Natural killer cell (primary cell): ENCODE measurements at regions of chr1 and their contacts with region 1.

Region 1: DNA sequence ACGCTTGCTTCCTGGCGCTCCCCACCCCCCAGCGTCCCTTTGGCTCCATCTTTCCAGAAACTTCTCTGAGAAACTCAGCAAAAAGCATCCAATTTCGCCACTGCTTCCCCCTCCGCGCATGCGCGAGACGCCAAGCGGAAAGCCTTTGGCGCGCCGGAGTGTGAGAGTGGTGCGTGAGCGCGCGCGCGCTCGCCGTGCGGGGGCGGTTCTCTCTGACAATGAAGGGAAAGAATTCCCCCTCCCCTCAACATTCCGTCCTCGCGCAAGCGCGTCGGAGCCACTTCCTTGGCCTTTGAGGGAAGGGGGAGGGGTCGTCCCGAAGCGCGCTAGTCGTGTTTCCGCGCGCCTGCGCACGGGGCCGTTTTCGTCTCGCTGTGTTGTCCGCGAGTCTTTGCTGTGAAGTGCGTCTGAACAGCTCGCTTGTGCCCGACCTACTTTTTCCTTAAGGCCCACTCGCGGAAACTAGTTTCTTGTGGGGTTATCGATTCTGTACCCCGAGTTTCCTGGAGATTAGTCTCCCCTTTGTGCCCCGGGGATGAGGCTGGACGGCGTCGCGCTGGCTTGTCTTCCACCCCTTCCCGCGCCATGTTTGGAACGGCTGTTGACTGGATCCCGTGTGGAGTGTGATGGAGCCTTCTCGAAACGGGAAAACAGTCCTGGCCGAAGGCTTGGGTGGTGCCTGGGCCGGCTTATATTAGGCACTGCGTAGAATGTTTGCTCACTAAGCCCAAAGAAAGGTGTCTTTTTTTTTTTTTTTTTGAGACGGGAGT is 11.6 kb upstream of the SPEN start:
- DNase-seq: peak; percentile 96 to 100
- ATAC-seq: peak; percentile 51 to 77 (median 58)
- H3K4me3 ChIP-seq: peak overlapping the region; percentile 80
- H3K4me3 Mint-ChIP-seq: peak overlapping the region; percentile 96
- H3K27ac ChIP-seq: peak overlapping the region; percentile 96
- H3K27ac Mint-ChIP-seq: peak overlapping the region; percentile 95 to 99
- H3K4me1 ChIP-seq: peaks cover 32% of the 10 kb centered on the region
- H3K4me1 Mint-ChIP-seq: peaks cover 30 to 35% of the 10 kb centered on the region in 2 donors
- H3K27me3 ChIP-seq: no peaks in the 10 kb centered on the region
- H3K27me3 Mint-ChIP-seq: no peaks in the 10 kb centered on the region
- CTCF ChIP-seq: no peak

Region 2: DNA sequence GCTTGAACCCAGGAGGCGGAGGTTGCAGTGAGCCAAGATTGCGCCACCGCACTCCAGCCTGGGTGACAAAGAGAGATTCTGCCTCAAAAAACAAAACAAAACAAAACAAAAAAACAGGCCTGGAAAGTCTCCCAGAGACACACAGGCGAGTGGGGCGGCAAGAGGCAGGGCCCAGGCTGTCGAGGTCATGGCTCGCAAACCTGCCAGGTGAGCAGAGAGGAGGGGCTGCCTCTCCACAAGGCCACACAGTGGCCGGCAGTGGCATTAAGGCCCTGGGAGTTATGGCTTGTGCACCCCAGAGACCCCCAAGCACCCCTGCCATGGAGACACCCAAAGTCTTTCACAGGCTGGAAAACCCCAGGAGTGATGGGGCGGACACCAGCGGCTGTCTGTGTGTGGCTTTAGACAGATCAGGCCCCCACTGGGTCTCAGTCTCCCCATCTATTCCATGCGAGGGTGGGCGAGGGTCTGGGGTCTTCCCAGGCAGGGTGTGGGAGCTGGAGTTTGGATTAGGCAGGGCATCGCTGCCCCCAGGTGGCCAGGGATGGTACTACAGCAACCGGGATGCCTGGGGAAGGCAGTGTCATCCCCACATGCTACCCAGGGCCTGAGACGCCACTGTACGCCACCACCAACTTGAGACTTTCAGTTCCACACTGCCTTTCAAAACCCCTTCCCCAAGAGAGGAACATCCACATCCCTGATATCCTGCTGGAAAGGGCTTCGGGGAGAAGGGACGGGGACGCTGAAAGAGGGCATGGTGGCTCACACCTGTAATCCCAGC is 404.9 kb before region 1 on chr1:
- intact Hi-C with region 1: no loop called
- DNase-seq: peak; percentile 84
- ATAC-seq: peak; percentile 51 to 76 (median 57)
- H3K4me3 ChIP-seq: no peak overlapping the region
- H3K4me3 Mint-ChIP-seq: peak overlapping the region; percentile 45
- H3K27ac ChIP-seq: peak overlapping the region; percentile 52
- H3K27ac Mint-ChIP-seq: peak overlapping the region; percentile 88 to 93
- H3K4me1 ChIP-seq: peaks cover 51% of the 10 kb centered on the region
- H3K4me1 Mint-ChIP-seq: peaks cover 45 to 68% of the 10 kb centered on the region in 2 donors
- H3K27me3 ChIP-seq: no peaks in the 10 kb centered on the region
- H3K27me3 Mint-ChIP-seq: no peaks in the 10 kb centered on the region
- CTCF ChIP-seq: peak; percentile 96

Region 3: GRCh38 chr1:15627343-15627988 is 208.5 kb before region 1 on chr1:
- intact Hi-C with region 1: no loop called
- DNase-seq: no peak
- ATAC-seq: no peak
- H3K4me3 ChIP-seq: no peak overlapping the region
- H3K4me3 Mint-ChIP-seq: no peak overlapping the region
- H3K27ac ChIP-seq: no peak overlapping the region
- H3K27ac Mint-ChIP-seq: peak overlapping the region in 1 of 2 donors; percentile 27
- H3K4me1 ChIP-seq: no peaks in the 10 kb centered on the region
- H3K4me1 Mint-ChIP-seq: peaks cover 19 to 21% of the 10 kb centered on the region in 2 donors
- H3K27me3 ChIP-seq: no peaks in the 10 kb centered on the region
- H3K27me3 Mint-ChIP-seq: no peaks in the 10 kb centered on the region
- CTCF ChIP-seq: no peak

Region 4: GRCh38 chr1:15820478-15820877 is 15.4 kb before region 1 on chr1:
- intact Hi-C with region 1: no loop called
- DNase-seq: no peak
- ATAC-seq: no peak
- H3K4me3 ChIP-seq: no peak overlapping the region
- H3K4me3 Mint-ChIP-seq: no peak overlapping the region
- H3K27ac ChIP-seq: no peak overlapping the region
- H3K27ac Mint-ChIP-seq: no peak overlapping the region
- H3K4me1 ChIP-seq: no peaks in the 10 kb centered on the region
- H3K4me1 Mint-ChIP-seq: peaks cover 3 to 4% of the 10 kb centered on the region in 2 donors
- H3K27me3 ChIP-seq: no peaks in the 10 kb centered on the region
- H3K27me3 Mint-ChIP-seq: no peaks in the 10 kb centered on the region
- CTCF ChIP-seq: no peak

Region 5: DNA sequence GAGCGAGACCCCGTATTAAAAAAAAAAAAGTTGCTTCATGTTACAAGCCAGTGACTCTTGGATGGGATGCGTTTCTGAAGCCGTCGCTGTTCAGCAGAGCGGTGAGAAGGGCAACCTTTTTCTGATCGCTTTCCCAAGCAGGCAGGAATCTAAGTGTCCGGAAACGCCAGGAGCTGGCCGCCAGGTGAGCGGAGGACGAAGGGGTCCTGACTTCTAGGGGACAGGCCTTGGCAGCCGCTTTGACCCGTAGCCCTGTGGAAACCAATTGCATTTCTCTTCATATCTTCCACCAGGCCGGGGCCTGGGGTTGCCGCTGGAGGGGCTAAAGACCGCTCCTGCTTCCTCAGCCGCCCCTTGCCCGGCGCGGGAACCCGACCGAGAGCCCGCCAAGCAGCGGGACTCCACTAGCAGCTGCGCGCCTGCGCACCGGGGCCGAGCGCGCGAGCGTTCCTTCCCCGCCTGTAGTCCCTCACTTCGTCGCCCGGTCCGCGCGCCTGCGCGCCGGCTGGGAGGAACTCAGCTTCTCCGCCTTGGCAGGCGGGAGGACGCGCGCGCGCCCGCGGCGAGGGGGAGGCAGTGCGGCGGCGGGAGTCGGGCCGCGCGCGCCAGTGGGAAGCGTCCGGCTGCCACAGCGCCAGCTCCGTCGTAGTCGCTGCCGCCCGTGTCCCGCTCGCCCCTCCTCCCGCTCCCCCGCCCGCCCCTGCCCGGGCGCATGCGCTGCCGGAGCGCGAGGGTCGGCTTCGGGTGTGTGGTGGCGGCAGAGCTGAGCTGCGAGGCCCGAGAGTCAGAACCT is 11.4 kb after region 1 on chr1 and contains the start of gene SPEN:
- intact Hi-C with region 1: loop called (anchors 1 kb)
- DNase-seq: peak; percentile 95 to 99
- ATAC-seq: peak; percentile 80 to 95 (median 85)
- H3K4me3 ChIP-seq: peak within 1 kb of the TSS; percentile 98
- H3K4me3 Mint-ChIP-seq: peak within 1 kb of the TSS; percentile 98
- H3K27ac ChIP-seq: peak within 1 kb of the TSS; percentile 99
- H3K27ac Mint-ChIP-seq: peak within 1 kb of the TSS; percentile 95 to 96
- H3K4me1 ChIP-seq: peaks cover 37% of the 10 kb centered on the region
- H3K4me1 Mint-ChIP-seq: peaks cover 30% of the 10 kb centered on the region in 2 donors
- H3K27me3 ChIP-seq: no peaks in the 10 kb centered on the region
- H3K27me3 Mint-ChIP-seq: no peaks in the 10 kb centered on the region
- CTCF ChIP-seq: no peak
- total RNA-seq, gene SPEN: 98.1 to 114 (median 105) TPM

Region 6: GRCh38 chr1:15885701-15886610 is 50.0 kb after region 1 on chr1:
- intact Hi-C with region 1: loop called (anchors 5 kb)
- DNase-seq: peak; percentile 42 to 48
- ATAC-seq: peak; percentile 57 to 72 (median 58)
- H3K4me3 ChIP-seq: peak overlapping the region; percentile 6
- H3K4me3 Mint-ChIP-seq: peak overlapping the region; percentile 43
- H3K27ac ChIP-seq: peak overlapping the region; percentile 59
- H3K27ac Mint-ChIP-seq: peak overlapping the region; percentile 64 to 76
- H3K4me1 ChIP-seq: peaks cover 22% of the 10 kb centered on the region
- H3K4me1 Mint-ChIP-seq: peaks cover 49 to 57% of the 10 kb centered on the region in 2 donors
- H3K27me3 ChIP-seq: no peaks in the 10 kb centered on the region
- H3K27me3 Mint-ChIP-seq: no peaks in the 10 kb centered on the region
- CTCF ChIP-seq: no peak

Region 7: DNA sequence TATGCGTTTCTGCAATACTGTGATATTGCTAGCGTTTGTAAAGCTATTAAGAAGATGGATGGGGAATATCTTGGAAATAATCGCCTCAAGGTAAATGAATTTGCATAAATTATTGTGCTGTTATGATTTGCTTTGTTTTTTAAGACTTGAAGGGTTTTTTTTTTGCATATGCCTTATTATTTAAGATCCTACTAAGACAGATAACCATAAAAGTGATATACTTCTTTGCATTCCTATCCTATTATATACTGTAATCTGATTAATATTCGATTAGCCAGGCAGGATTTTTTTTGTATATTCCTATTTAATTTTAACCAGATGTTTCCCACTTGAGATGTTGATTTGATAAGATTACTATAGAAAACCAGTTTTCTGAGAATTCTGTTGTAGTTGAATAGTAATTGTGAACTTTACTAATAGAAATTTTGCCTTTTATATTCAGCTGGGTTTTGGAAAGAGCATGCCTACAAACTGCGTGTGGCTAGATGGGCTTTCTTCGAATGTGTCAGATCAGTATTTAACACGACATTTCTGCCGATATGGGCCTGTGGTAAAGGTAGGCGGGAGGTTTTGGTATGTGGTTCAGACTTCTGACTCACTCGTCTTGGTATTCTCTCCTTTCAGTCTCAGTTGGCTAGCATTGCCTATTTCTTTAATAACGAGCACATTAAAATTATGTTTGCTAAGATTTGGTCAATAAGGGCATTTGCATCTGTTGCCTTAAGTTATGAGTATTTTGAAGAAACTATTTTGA is 83.2 kb after region 1 on chr1:
- intact Hi-C with region 1: loop called (anchors 5 kb)
- DNase-seq: peak in 1 of 2 donors; percentile 67
- ATAC-seq: peak; percentile 74 to 88 (median 82)
- H3K4me3 ChIP-seq: no peak overlapping the region
- H3K4me3 Mint-ChIP-seq: no peak overlapping the region
- H3K27ac ChIP-seq: no peak overlapping the region
- H3K27ac Mint-ChIP-seq: peak overlapping the region; percentile 29 to 75
- H3K4me1 ChIP-seq: peaks cover 11% of the 10 kb centered on the region
- H3K4me1 Mint-ChIP-seq: peaks cover 27 to 35% of the 10 kb centered on the region in 2 donors
- H3K27me3 ChIP-seq: no peaks in the 10 kb centered on the region
- H3K27me3 Mint-ChIP-seq: no peaks in the 10 kb centered on the region
- CTCF ChIP-seq: no peak

Region 8: GRCh38 chr1:15949453-15950245 is 113.7 kb after region 1 on chr1:
- intact Hi-C with region 1: loop called (anchors 2 kb)
- DNase-seq: peak; percentile 87 to 97
- ATAC-seq: peak; percentile 90 to 96 (median 93)
- H3K4me3 ChIP-seq: peak overlapping the region; percentile 11
- H3K4me3 Mint-ChIP-seq: peak overlapping the region; percentile 50
- H3K27ac ChIP-seq: peak overlapping the region; percentile 95
- H3K27ac Mint-ChIP-seq: peak overlapping the region; percentile 87 to 93
- H3K4me1 ChIP-seq: peaks cover 56% of the 10 kb centered on the region
- H3K4me1 Mint-ChIP-seq: peaks cover 57 to 69% of the 10 kb centered on the region in 2 donors
- H3K27me3 ChIP-seq: no peaks in the 10 kb centered on the region
- H3K27me3 Mint-ChIP-seq: no peaks in the 10 kb centered on the region
- CTCF ChIP-seq: no peak

Region 9: GRCh38 chr1:15975358-15975804 is 139.5 kb after region 1 on chr1:
- intact Hi-C with region 1: no loop called
- DNase-seq: peak; percentile 71 to 75
- ATAC-seq: peak; percentile 79 to 82 (median 82)
- H3K4me3 ChIP-seq: peak overlapping the region; percentile 79
- H3K4me3 Mint-ChIP-seq: peak overlapping the region; percentile 95
- H3K27ac ChIP-seq: peak overlapping the region; percentile 54
- H3K27ac Mint-ChIP-seq: peak overlapping the region; percentile 87 to 92
- H3K4me1 ChIP-seq: peaks cover 13% of the 10 kb centered on the region
- H3K4me1 Mint-ChIP-seq: peaks cover 22 to 34% of the 10 kb centered on the region in 2 donors
- H3K27me3 ChIP-seq: no peaks in the 10 kb centered on the region
- H3K27me3 Mint-ChIP-seq: no peaks in the 10 kb centered on the region
- CTCF ChIP-seq: no peak

Region 10: GRCh38 chr1:16904560-16905111 is 1068.7 kb after region 1 on chr1:
- intact Hi-C with region 1: loop called (anchors 10 kb)
- DNase-seq: peak; percentile 98
- ATAC-seq: peak; percentile 89 to 98 (median 90)
- H3K4me3 ChIP-seq: peak overlapping the region; percentile 49
- H3K4me3 Mint-ChIP-seq: no peak overlapping the region
- H3K27ac ChIP-seq: peak overlapping the region; percentile 90
- H3K27ac Mint-ChIP-seq: no peak overlapping the region
- H3K4me1 ChIP-seq: peaks cover 17% of the 10 kb centered on the region
- H3K4me1 Mint-ChIP-seq: peaks cover 18 to 25% of the 10 kb centered on the region in 2 donors
- H3K27me3 ChIP-seq: no peaks in the 10 kb centered on the region
- H3K27me3 Mint-ChIP-seq: no peaks in the 10 kb centered on the region
- CTCF ChIP-seq: no peak